MCF 10A (cell line): ENCODE measurements at regions of chr1 and their contacts with region 1.

Region 1: GRCh38 chr1:42173155-42173933 is 8.8 kb upstream of the GUCA2A start:
- DNase-seq: peak; percentile 58
- H3K4me3 Mint-ChIP-seq: no peak overlapping the region
- H3K27ac Mint-ChIP-seq: no peak overlapping the region
- H3K4me1 Mint-ChIP-seq: peaks cover 23% of the 10 kb centered on the region
- H3K27me3 Mint-ChIP-seq: no peaks in the 10 kb centered on the region
- CTCF ChIP-seq: peak; percentile 91

Region 2: DNA sequence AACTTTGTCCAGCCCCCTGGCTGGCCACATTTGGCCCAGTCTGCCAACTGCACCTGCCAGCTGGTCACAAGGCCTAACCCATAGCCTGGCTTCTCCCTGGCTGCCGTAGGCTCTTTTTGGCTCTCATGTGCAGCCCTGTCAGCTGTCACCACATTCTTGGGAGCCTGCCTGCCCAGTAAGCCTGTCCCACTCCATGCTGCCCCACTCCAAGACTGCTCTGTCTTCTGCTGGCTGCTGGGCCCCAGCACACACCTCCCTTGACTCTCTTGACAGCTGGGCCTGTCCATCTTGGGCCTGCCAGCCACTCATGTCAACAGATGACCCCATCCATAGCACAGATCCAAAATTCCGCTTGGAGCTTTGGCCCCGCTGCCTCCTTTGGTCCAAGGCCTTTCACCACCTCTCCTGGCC is 614.6 kb before region 1 on chr1:
- CTCF ChIA-PET with region 1: no interaction called
- POLR2A ChIA-PET with region 1: no interaction called
- intact Hi-C with region 1: no loop called
- DNase-seq: no peak
- H3K4me3 Mint-ChIP-seq: no peak overlapping the region
- H3K27ac Mint-ChIP-seq: no peak overlapping the region
- H3K4me1 Mint-ChIP-seq: no peaks in the 10 kb centered on the region
- H3K27me3 Mint-ChIP-seq: no peaks in the 10 kb centered on the region
- CTCF ChIP-seq: no peak

Region 3: DNA sequence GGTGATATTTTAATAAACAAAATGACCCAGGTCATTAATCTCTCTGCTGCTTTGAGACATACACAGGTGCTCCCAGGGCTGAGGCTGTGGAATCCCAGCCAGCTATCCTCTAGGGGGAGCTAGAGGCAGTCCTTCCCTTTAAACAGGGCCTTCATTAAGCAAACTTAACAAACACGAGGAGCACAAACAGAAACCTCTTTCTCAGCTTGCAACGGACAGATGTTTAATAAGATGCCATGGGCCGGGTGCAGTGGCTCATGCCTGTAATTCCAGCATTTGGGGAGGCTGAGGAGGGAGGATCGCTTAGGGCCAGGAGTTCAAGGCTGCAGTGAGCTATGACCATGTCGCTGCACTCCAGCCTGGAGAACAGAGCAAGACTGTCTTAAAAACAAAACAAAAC is 361.3 kb before region 1 on chr1:
- CTCF ChIA-PET with region 1: no interaction called
- POLR2A ChIA-PET with region 1: no interaction called
- intact Hi-C with region 1: loop called (anchors 1 kb)
- DNase-seq: peak; percentile 79
- H3K4me3 Mint-ChIP-seq: no peak overlapping the region
- H3K27ac Mint-ChIP-seq: no peak overlapping the region
- H3K4me1 Mint-ChIP-seq: peaks cover 7% of the 10 kb centered on the region
- H3K27me3 Mint-ChIP-seq: no peaks in the 10 kb centered on the region
- CTCF ChIP-seq: peak; percentile 59

Region 4: GRCh38 chr1:42057800-42058199 is 115.5 kb before region 1 on chr1:
- CTCF ChIA-PET with region 1: no interaction called
- POLR2A ChIA-PET with region 1: no interaction called
- intact Hi-C with region 1: no loop called
- DNase-seq: no peak
- H3K4me3 Mint-ChIP-seq: no peak overlapping the region
- H3K27ac Mint-ChIP-seq: no peak overlapping the region
- H3K4me1 Mint-ChIP-seq: no peaks in the 10 kb centered on the region
- H3K27me3 Mint-ChIP-seq: peaks cover 29% of the 10 kb centered on the region
- CTCF ChIP-seq: no peak

Region 5: GRCh38 chr1:42157667-42158066 is 15.7 kb before region 1 on chr1:
- CTCF ChIA-PET with region 1: interaction called, 87 read pairs
- POLR2A ChIA-PET with region 1: interaction called, 3 read pairs
- intact Hi-C with region 1: no loop called
- DNase-seq: no peak
- H3K4me3 Mint-ChIP-seq: no peak overlapping the region
- H3K27ac Mint-ChIP-seq: no peak overlapping the region
- H3K4me1 Mint-ChIP-seq: no peaks in the 10 kb centered on the region
- H3K27me3 Mint-ChIP-seq: peaks cover 30% of the 10 kb centered on the region
- CTCF ChIP-seq: no peak

Region 6: GRCh38 chr1:42192106-42192505 is 18.8 kb after region 1 on chr1:
- CTCF ChIA-PET with region 1: interaction called, 11 read pairs
- POLR2A ChIA-PET with region 1: interaction called, 6 read pairs
- intact Hi-C with region 1: no loop called
- DNase-seq: no peak
- H3K4me3 Mint-ChIP-seq: peak overlapping the region; percentile 5
- H3K27ac Mint-ChIP-seq: peak overlapping the region; percentile 78
- H3K4me1 Mint-ChIP-seq: peaks cover 15% of the 10 kb centered on the region
- H3K27me3 Mint-ChIP-seq: no peaks in the 10 kb centered on the region
- CTCF ChIP-seq: no peak

Region 7: GRCh38 chr1:42462828-42463763 is 289.8 kb after region 1 on chr1 and contains the start of gene CCDC30:
- CTCF ChIA-PET with region 1: interaction called, 3 read pairs
- POLR2A ChIA-PET with region 1: interaction called, 3 read pairs
- intact Hi-C with region 1: loop called (anchors 2 kb)
- DNase-seq: peak; percentile 99
- H3K4me3 Mint-ChIP-seq: peak within 1 kb of the TSS; percentile 81
- H3K27ac Mint-ChIP-seq: peak within 1 kb of the TSS; percentile 89
- H3K4me1 Mint-ChIP-seq: peaks cover 11% of the 10 kb centered on the region
- H3K27me3 Mint-ChIP-seq: no peaks in the 10 kb centered on the region
- CTCF ChIP-seq: no peak
- total RNA-seq, gene CCDC30: 2.2 and 3.2 TPM in 2 replicates